Heart right ventricle (tissue), 16 donors: ENCODE measurements at regions of chr9 and their contacts with region 1.

Region 1: GRCh38 chr9:130578865-130579737 is at the start of gene FUBP3:
- DNase-seq: peak; percentile 94 to 96
- ATAC-seq: peak; percentile 95 to 99 (median 98)
- H3K4me3 ChIP-seq: peak within 1 kb of the TSS; percentile 73 to 100 (median 89)
- H3K27ac ChIP-seq: peak within 1 kb of the TSS; percentile 86 to 97 (median 96)
- H3K4me1 ChIP-seq: peaks cover 11 to 63% (median 45%) of the 10 kb centered on the region in 9 donors
- H3K27me3 ChIP-seq: no peaks in the 10 kb centered on the region
- CTCF ChIP-seq: no peak
- total RNA-seq, gene FUBP3: 20.5 to 40.3 (median 27.7) TPM

Region 2: GRCh38 chr9:130461218-130461630 is 117.9 kb before region 1 on chr9:
- intact Hi-C with region 1: loop called in 1 of 10 experiments (anchors 10 kb)
- DNase-seq: peak; percentile 48 to 69
- ATAC-seq: peak; percentile 36 to 75 (median 64)
- H3K4me3 ChIP-seq: no peak overlapping the region
- H3K27ac ChIP-seq: no peak overlapping the region
- H3K4me1 ChIP-seq: peaks cover 0 to 24% (median 11%) of the 10 kb centered on the region in 9 donors
- H3K27me3 ChIP-seq: peaks cover 0 to 4% (median 0%) of the 10 kb centered on the region in 7 donors
- CTCF ChIP-seq: peak; percentile 89 to 97 (median 94)

Region 3: DNA sequence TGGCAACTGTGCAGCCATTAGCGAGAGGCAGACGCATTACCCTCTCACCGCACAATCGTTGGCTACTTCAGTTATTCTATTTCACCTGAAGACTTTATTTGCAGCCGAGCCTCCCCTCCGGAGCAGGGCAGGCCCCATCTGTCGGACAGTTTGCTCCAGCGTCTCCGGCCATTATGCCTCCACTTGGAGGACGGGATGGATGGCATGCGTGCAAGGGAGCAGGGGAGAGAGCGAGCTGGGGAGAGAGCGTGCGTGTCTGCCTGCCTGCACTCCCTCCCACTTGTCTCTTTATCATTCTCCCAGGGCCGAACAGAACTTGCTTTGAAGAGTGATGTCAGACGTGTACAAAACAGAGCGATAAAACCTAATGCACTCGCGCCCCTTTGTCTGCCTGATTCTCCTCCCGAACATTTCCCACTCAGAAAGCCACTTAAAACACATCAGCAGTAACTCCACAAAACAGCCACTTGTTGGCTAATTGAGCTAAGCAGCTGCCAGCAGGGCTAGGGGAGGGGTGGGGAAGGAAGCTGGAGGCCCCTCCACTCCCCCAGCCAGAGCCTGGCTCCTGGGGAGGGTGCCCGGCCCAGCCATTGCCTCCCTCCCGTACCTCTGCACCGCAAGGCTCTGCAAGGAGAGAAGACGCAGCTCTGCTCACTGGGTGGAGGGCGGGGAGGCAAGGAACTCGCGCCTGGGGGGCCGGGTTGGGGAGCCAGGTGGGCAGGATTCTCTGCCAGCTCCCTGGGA is 43.1 kb before region 1 on chr9:
- intact Hi-C with region 1: loop called in 1 of 10 experiments (anchors 5 kb)
- DNase-seq: peak in 1 of 2 donors; percentile 29
- ATAC-seq: peak in 7 of 8 donors; percentile 41 to 85 (median 68)
- H3K4me3 ChIP-seq: peak overlapping the region in 8 of 10 donors; percentile 11 to 38 (median 35)
- H3K27ac ChIP-seq: peak overlapping the region in 3 of 10 donors; percentile 10 to 15 (median 13)
- H3K4me1 ChIP-seq: peaks cover 0 to 19% (median 7%) of the 10 kb centered on the region in 9 donors
- H3K27me3 ChIP-seq: peaks cover 0 to 70% (median 60%) of the 10 kb centered on the region in 7 donors
- CTCF ChIP-seq: no peak

Region 4: DNA sequence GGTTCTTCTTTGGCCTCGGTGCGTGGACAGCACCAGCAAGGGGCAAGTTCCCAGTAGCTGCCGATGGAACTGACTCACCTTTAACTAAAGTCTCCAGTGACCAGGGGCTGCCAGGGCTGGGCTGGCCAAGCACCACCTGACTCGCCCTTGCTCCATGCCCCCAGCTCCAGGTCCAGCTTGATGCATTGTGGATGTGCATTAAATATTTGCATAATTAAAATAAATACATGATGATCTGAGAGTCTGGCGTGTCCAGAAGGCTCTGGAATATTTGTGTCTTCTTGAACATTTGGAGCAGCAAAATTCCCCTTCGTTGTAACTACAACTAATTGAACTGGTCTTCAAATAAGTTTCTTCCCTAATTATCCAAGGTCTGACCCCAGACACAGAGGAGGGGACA is 75.8 kb after region 1 on chr9:
- intact Hi-C with region 1: no loop called
- DNase-seq: no peak
- ATAC-seq: no peak
- H3K4me3 ChIP-seq: no peak overlapping the region
- H3K27ac ChIP-seq: no peak overlapping the region
- H3K4me1 ChIP-seq: peaks cover 0 to 5% (median 3%) of the 10 kb centered on the region in 9 donors
- H3K27me3 ChIP-seq: peaks cover 20 to 85% (median 59%) of the 10 kb centered on the region in 7 donors
- CTCF ChIP-seq: no peak